GM10248 (cell line): ENCODE measurements at regions of chr17 and their contacts with region 1.

Region 1: DNA sequence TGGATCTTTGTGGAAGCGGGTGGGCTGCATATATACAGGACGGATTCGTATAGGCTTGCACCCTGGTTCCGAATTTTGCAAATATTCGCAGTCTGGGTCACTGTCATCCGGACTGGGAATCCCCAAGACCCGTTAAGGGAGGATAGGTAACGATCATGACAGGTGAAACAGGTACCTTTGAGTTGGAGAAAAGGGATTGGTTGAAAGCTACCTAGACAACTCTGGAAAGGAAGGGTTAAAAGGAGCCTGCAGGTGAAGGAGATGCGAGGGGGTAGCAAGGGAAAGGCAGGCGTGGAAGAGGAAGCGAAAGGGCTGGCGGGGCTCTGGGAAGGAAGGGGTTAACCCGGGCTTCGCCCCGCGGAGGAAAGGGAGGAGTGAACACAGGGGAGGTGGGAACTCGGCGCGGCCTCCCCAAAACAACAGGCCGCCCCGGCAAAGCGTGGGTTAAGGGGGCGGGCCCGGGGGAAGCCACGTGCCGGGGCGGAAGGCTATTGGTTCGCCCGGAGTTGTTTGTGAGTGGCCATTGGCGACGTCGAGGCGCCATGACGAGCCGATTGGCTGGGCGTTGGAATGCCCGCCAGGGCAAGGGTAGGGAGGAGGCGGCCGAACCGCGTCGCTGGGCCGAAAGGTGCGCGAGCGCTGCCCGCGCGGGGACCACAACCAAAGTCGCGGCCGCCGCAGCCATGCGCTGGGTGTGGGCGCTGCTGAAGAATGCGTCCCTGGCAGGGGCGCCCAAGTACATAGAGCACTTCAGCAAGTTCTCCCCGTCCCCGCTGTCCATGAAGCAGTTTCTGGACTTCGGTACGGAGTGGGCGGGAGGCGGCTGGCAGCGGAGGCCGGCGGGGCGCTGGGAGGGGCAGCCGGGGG is at the start of gene PDK2:
- DNase-seq: peak; percentile 98
- CTCF ChIP-seq: no peak

Region 2: DNA sequence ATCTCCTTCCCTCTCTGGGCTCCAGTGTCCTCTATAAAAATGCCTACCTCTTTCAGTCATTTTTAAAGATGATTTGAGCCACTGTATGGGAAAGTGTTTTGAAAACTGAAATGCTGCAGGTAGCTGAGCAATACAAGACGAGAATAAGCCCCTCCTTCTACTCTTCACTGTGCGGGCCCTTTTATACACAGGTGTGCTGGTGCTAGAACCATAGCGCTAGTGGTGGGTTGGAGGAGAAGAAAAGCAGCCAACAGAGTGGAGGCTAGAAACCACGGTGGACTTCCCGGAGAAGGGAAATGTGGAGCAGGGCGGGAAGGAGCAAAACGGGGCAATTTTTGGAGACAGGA is 184.2 kb before region 1 on chr17:
- CTCF ChIA-PET with region 1: no interaction called
- POLR2A ChIA-PET with region 1: no interaction called
- DNase-seq: no peak
- CTCF ChIP-seq: no peak

Region 3: GRCh38 chr17:49987681-49988441 is 107.1 kb before region 1 on chr17:
- CTCF ChIA-PET with region 1: no interaction called
- POLR2A ChIA-PET with region 1: no interaction called
- DNase-seq: no peak
- CTCF ChIP-seq: no peak

Region 4: GRCh38 chr17:50026901-50027630 is 67.9 kb before region 1 on chr17:
- CTCF ChIA-PET with region 1: interaction called, 75 read pairs
- POLR2A ChIA-PET with region 1: no interaction called
- DNase-seq: peak; percentile 88
- CTCF ChIP-seq: peak; percentile 97

Region 5: DNA sequence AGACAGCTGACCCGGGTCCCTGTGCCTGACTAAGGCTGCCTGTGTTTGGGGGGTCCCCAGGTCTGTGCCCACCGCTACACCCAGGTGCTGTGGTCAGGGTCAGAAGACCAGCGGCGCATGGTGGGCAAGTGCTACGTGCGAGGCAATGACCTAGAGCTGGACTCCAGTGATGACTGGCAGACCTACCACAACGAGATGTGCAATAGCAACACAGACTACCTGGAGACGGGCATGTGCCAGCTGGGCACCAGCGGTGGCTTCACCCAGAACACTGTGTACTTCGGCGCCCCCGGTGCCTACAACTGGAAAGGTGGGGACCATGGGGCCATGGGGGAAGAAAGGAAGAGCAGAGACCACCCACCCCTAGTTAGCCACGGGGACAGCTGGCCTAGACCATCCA is 27.0 kb before region 1 on chr17:
- CTCF ChIA-PET with region 1: interaction called, 12 read pairs
- POLR2A ChIA-PET with region 1: no interaction called
- DNase-seq: no peak
- CTCF ChIP-seq: no peak

Region 6: GRCh38 chr17:50123649-50124349 is 28.8 kb after region 1 on chr17:
- CTCF ChIA-PET with region 1: interaction called, 246 read pairs
- POLR2A ChIA-PET with region 1: no interaction called
- DNase-seq: no peak
- CTCF ChIP-seq: no peak

Region 7: GRCh38 chr17:50151041-50151936 is 56.3 kb after region 1 on chr17:
- CTCF ChIA-PET with region 1: interaction called, 10 read pairs
- POLR2A ChIA-PET with region 1: no interaction called
- DNase-seq: peak; percentile 94
- CTCF ChIP-seq: peak; percentile 40

Region 8: DNA sequence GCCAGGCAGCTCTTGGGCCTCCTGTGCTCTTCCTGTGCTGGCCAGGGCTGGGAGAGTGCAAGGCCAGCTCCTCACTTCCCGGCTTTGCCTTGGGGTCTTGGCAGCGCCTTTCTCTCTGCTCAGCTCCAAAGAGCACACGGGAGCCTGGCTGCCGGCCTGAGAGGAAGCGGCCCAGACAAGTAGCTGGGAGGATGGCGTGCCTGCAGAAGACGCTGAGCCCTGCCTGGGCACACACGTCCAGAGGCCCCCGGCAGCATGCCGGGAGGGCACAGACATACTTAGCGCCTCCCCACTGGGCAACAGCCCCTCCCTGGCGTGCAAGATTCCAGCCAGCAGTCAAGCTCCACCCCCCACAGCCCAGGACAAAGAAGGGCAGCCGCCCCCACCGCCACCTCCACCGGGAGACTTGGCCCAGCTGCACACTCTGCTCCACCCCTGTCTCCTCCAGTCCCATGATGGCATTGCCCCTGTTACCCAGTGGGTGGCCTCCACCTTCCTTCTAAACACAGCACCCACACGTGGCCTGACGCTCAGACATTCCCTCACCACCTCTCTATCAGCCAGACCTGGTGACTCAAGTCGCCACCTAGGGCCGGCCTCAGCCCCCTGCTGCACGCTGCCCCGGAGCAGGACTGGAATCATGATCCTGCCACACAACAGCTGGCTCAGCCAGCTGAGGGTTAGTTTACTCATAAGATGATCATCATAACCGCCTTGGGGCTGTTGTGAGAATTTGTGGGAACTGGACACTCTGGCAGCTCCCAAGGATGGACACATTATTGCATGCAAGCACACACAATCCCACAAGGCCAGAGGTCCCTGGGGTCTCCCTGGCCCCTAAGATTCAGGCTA is 83.2 kb after region 1 on chr17:
- CTCF ChIA-PET with region 1: interaction called, 20 read pairs
- POLR2A ChIA-PET with region 1: no interaction called
- DNase-seq: peak; percentile 77
- CTCF ChIP-seq: peak; percentile 78

Region 9: GRCh38 chr17:50210240-50211225 is 115.5 kb after region 1 on chr17:
- CTCF ChIA-PET with region 1: no interaction called
- POLR2A ChIA-PET with region 1: no interaction called
- DNase-seq: no peak
- CTCF ChIP-seq: no peak

Region 10: GRCh38 chr17:50269477-50270434 is 174.8 kb after region 1 on chr17:
- CTCF ChIA-PET with region 1: interaction called, 11 read pairs
- POLR2A ChIA-PET with region 1: no interaction called
- DNase-seq: peak; percentile 74
- CTCF ChIP-seq: peak; percentile 73